T-cell (primary cell): ENCODE measurements at regions of chr10 and their contacts with region 1.

Region 1: DNA sequence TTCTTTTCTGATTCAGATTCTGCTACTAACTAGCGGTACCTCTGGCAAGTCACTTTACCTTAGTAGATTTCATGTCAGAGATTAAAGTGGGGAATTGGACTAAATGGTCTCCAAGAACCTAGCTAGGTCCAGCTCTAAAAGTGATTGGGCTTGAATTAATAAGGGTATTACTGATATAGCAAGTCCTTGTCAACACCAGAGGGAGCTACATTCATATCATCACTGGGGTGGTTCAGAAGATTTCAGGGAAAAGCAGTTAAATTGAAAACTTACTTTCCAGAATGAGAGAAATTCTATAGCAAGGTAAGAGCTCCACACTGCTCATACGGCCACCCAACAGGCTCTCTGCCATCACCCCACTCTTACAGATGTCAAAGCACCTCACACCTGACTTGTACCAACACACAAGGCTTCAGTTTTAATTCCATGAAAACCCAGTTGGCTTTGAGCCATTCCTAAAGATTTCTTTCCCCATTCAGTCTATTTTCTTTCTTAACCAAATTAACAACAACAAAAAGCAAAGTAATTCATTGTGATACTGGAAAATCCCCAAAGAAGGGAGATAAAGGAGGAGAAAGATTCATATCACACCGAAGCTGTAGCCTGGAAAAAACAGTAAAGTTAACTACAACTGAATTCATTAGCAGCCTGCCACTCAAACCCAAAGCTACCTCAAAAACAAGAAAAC is 38.0 kb upstream of the SPOCK2 start:
- DNase-seq: peak in 1 of 35 experiments; percentile 55
- ATAC-seq: peak in 2 of 4 experiments; percentile 31 to 44
- H3K4me3 ChIP-seq: no peak overlapping the region
- H3K4me3 Mint-ChIP-seq: no peak overlapping the region
- H3K27ac ChIP-seq: no peak overlapping the region
- H3K27ac Mint-ChIP-seq: peak overlapping the region; percentile 28 to 54
- H3K4me1 ChIP-seq: peaks cover 5 to 7% of the 10 kb centered on the region in 2 experiments
- H3K4me1 Mint-ChIP-seq: peaks cover 33 to 37% (median 34%) of the 10 kb centered on the region in 3 donors
- H3K27me3 ChIP-seq: no peaks in the 10 kb centered on the region
- H3K27me3 Mint-ChIP-seq: no peaks in the 10 kb centered on the region

Region 2: GRCh38 chr10:72137583-72137982 is 11.3 kb after region 1 on chr10:
- CTCF ChIA-PET with region 1: interaction called in 1 of 2 experiments, 6 read pairs
- POLR2A ChIA-PET with region 1: interaction called in 1 of 2 experiments, 14 read pairs
- DNase-seq: no peak
- ATAC-seq: no peak
- H3K4me3 ChIP-seq: no peak overlapping the region
- H3K4me3 Mint-ChIP-seq: no peak overlapping the region
- H3K27ac ChIP-seq: no peak overlapping the region
- H3K27ac Mint-ChIP-seq: no peak overlapping the region
- H3K4me1 ChIP-seq: peaks cover 15 to 23% of the 10 kb centered on the region in 2 experiments
- H3K4me1 Mint-ChIP-seq: peaks cover 30 to 39% (median 33%) of the 10 kb centered on the region in 3 donors
- H3K27me3 ChIP-seq: no peaks in the 10 kb centered on the region
- H3K27me3 Mint-ChIP-seq: no peaks in the 10 kb centered on the region

Region 3: GRCh38 chr10:72461085-72461484 is 334.8 kb after region 1 on chr10:
- CTCF ChIA-PET with region 1: no interaction called
- POLR2A ChIA-PET with region 1: interaction called in 1 of 2 experiments, 14 read pairs
- DNase-seq: no peak
- ATAC-seq: no peak
- H3K4me3 ChIP-seq: no peak overlapping the region
- H3K4me3 Mint-ChIP-seq: no peak overlapping the region
- H3K27ac ChIP-seq: no peak overlapping the region
- H3K27ac Mint-ChIP-seq: no peak overlapping the region
- H3K4me1 ChIP-seq: no peaks in the 10 kb centered on the region
- H3K4me1 Mint-ChIP-seq: no peaks in the 10 kb centered on the region
- H3K27me3 ChIP-seq: no peaks in the 10 kb centered on the region
- H3K27me3 Mint-ChIP-seq: no peaks in the 10 kb centered on the region